ENCODE measurements at regions of chr2 and their contacts with region 1.

Region 1: DNA sequence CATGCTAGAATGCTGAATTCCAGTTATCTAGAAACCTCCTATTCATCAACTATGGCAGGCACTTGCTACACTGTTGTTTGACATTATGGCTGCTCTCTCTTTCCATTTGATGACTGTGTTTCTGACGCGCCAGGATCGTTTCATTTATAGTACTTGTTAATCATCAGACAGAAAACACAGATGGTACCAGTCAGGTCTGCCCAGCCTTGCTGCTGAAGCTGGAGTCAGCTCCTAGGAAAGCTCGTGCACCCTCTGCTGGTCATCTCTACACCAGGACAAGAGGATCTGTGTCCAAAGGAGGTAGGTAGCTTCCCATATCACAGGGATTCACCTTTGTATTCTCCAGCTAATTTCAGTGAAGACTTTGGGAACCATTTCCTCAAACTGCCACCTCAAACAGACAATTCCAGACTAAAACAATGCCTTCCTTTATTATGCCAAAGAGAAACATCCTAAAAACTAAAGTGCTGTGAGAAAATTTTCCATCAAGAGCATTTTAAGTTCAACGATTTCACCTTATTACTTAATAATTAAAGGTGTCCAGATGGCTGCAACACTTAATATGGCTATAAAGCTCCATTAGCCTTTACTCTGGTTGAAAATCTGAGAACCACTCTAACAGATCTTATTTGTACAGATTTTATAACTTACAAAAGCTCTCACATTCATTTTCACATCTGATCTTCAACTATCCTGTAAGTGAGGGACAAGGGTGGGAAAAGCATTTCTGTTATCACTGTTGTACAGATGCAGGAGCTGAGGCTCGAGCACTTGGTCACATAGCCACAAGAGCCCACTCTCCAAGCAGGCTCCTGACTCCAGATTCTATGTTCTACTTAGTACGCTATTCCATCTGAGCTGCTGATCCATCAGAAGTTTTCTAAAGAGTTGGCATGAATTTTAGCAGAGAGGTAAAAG is 17.5 kb downstream of the METTL8 start:
- DNase-seq: peak; percentile 89
- ATAC-seq: peak; percentile 95
- H3K4me3 Mint-ChIP-seq: no peak overlapping the region
- H3K27ac Mint-ChIP-seq: peak overlapping the region; percentile 61
- H3K4me1 Mint-ChIP-seq: peaks cover 27% of the 10 kb centered on the region
- H3K27me3 Mint-ChIP-seq: no peaks in the 10 kb centered on the region

Region 2: DNA sequence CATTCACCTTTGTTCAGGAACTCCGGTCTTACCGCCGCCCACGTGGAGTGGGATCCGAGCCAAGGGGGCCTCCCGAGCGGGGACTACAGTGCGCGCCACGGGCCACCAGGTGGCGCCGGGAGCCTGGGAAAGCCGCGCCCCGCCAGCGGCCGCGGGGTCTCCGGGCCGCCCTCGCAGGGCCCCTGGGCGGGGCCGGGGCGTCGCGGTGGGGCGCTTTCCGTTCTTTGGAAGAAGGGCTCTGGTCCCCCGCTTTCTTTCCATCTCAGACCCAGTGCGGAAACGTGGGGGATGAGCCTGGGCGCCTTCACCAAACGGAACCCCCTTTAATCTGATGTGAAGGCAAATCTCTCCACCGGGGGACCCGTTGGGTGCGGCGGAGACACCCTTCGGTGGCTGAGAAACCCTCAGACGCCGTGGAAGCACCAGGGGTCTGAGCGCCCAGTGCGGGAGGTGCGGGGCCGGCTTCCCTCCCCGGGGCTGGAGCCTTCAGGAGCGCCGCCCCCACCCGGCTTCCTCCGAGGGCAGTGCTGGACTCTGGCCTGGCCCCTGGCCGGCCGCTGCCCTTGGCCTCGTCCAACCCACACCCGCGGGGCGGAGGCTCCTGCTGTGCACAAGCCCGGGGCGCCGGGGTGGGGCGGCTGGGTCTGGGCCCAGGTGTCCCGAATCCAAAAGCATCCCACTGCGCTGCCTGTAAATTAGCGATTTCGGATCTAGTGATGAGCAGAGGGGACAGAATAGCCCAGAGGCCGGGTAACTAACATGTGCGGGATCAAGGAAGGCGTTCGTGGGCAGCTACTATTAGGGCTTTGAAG is 442.6 kb before region 1 on chr2:
- CTCF ChIA-PET with region 1: interaction called, 40 read pairs
- DNase-seq: peak; percentile 83
- ATAC-seq: peak; percentile 98
- H3K4me3 Mint-ChIP-seq: peak overlapping the region; percentile 74
- H3K27ac Mint-ChIP-seq: peak overlapping the region; percentile 70
- H3K4me1 Mint-ChIP-seq: peaks cover 6% of the 10 kb centered on the region
- H3K27me3 Mint-ChIP-seq: peaks cover 2% of the 10 kb centered on the region

Region 3: GRCh38 chr2:171160119-171160955 is 255.9 kb before region 1 on chr2 and contains the start of gene TLK1:
- CTCF ChIA-PET with region 1: interaction called, 15 read pairs
- DNase-seq: peak; percentile 76
- ATAC-seq: peak; percentile 64
- H3K4me3 Mint-ChIP-seq: peak within 1 kb of the TSS; percentile 91
- H3K27ac Mint-ChIP-seq: peak within 1 kb of the TSS; percentile 95
- H3K4me1 Mint-ChIP-seq: peaks cover 57% of the 10 kb centered on the region
- H3K27me3 Mint-ChIP-seq: no peaks in the 10 kb centered on the region
- total RNA-seq, gene TLK1: 81.3 to 83.2 TPM

Region 4: GRCh38 chr2:171433763-171434670 is 17.7 kb after region 1 on chr2 and contains the starts of genes DCAF17 and METTL8:
- CTCF ChIA-PET with region 1: interaction called, 24 read pairs
- DNase-seq: peak; percentile 97
- ATAC-seq: peak; percentile 92
- H3K4me3 Mint-ChIP-seq: peak within 1 kb of the TSS; percentile 85
- H3K27ac Mint-ChIP-seq: peak within 1 kb of the TSS; percentile 90
- H3K4me1 Mint-ChIP-seq: peaks cover 38% of the 10 kb centered on the region
- H3K27me3 Mint-ChIP-seq: no peaks in the 10 kb centered on the region
- total RNA-seq, gene DCAF17: 18.7 to 19.7 TPM
- total RNA-seq, gene METTL8: 20.4 to 33.7 TPM